ENCODE measurements at regions of chr15 and their contacts with region 1.

Region 1: GRCh38 chr15:78540141-78540928 is at the start of gene PSMA4:
- DNase-seq: peak; percentile 92
- H3K4me3 ChIP-seq: peak within 1 kb of the TSS; percentile 67 to 96 (median 88)
- H3K27ac ChIP-seq: peak within 1 kb of the TSS; percentile 92
- H3K4me1 ChIP-seq: peaks cover 13% of the 10 kb centered on the region
- H3K27me3 ChIP-seq: no peaks in the 10 kb centered on the region
- CTCF ChIP-seq: peak in 1 of 2 donors; percentile 29
- POLR2A ChIP-seq: no peak
- total RNA-seq, gene PSMA4: 250 and 260 TPM in 2 replicates

Region 2: DNA sequence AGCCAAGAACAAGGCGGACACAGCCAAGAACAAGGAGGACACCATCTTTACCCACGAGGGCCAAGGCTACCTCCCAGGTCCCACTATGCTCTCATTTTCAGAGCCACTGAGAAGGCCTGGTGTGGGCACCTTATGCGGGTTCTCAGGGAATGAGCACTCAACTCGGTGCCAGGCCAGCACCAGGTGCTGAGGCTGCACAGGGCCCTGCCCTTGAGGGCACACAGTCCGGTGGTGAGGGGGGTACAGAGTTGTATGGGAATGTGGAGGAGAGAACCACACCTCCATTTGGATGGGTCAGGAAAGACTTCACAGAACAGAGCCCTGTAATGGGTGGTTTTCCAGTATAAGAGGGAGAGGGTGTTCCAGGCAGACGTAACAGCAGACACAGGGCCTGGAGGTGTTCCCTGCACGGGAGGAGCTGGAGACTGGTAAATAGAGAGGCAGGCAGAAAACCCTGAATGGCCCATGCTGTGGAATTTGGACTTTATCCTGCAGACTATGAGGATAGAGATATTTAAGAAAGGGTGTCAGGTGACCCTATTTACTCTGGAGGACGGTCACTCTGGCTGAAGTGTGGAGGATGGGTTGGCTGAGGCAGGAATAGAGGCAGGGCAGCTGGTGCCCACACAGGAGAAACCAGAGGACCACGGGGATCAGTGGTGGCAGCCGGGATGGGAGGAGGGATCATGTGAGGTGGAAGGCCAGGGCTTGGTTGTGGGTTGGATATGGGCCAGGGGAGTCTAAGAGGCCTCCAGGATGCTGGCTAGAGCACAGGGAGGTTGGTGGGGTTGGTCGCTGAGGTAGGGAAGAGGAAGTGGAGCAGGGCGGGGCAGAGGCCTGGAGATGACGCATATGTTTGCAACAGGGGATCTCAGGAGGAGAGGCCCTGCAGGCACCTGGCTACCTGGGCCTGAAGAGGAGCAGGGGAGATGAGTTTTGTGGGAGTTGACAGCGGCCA is 165.6 kb before region 1 on chr15:
- CTCF ChIA-PET with region 1: no interaction called
- POLR2A ChIA-PET with region 1: no interaction called
- dilution Hi-C with region 1: no loop called
- intact Hi-C with region 1: no loop called
- DNase-seq: no peak
- H3K4me3 ChIP-seq: no peak overlapping the region
- H3K27ac ChIP-seq: no peak overlapping the region
- H3K4me1 ChIP-seq: no peaks in the 10 kb centered on the region
- H3K27me3 ChIP-seq: peaks cover 0 to 3% of the 10 kb centered on the region in 2 experiments
- CTCF ChIP-seq: no peak
- POLR2A ChIP-seq: no peak

Region 3: DNA sequence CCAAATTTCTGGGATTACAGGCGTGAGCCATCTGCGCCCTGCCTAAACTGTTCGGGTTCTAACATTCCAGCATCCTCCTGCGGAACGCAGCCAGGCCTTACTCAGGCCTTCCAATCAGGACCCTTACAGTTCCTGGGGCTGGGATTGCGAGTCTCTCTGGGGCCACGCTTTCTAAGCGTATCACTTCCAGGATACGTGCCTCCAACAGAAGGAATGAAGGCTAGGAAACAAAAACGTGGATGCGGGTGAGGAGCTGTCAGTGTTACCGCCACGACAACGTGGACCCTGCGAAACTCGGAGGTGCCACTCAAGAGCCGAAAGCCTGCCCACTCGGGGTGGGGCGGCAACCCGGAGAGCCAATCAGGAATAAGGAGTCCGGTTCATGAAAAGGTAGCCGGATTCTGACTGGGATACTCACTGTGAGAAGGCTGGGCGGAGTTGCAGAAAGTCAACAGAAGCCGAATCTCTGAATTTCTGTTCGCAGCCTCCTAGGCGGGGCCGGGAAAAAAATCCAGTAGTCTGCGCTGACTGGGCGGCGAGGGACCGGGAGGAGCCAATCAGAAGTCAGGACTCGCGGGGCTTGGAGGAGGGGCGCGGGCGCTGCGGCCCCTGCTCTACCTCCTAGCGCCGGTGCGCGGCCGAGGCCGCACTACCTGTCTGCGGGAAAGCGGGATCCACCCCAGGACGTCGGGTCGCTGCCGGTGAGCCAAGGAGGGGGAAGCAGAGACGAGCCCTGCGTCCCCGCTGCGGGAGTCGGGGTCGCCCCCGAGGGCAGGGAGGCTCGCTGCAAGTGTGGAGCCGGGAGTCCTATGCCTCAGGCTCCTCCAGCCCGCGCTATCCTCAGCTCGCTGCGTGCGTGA is 33.1 kb before region 1 on chr15 and contains the start of gene HYKK:
- CTCF ChIA-PET with region 1: no interaction called
- POLR2A ChIA-PET with region 1: no interaction called
- dilution Hi-C with region 1: no loop called
- intact Hi-C with region 1: loop called (anchors 1 kb)
- DNase-seq: peak; percentile 98
- H3K4me3 ChIP-seq: peak within 1 kb of the TSS; percentile 35 to 65 (median 65)
- H3K27ac ChIP-seq: no peak within 1 kb of the TSS
- H3K4me1 ChIP-seq: peaks cover 4% of the 10 kb centered on the region
- H3K27me3 ChIP-seq: peaks cover 3 to 4% of the 10 kb centered on the region in 2 experiments
- CTCF ChIP-seq: peak in 1 of 2 donors; percentile 21
- POLR2A ChIP-seq: no peak
- total RNA-seq, gene HYKK: 2.1 and 2.7 TPM in 2 replicates

Region 4: GRCh38 chr15:78565097-78565951 is 25.0 kb after region 1 on chr15 and contains the start of gene CHRNA5:
- CTCF ChIA-PET with region 1: interaction called, 27 read pairs
- POLR2A ChIA-PET with region 1: interaction called, 7 read pairs
- dilution Hi-C with region 1: no loop called
- intact Hi-C with region 1: loop called (anchors 1 kb)
- DNase-seq: peak; percentile 85
- H3K4me3 ChIP-seq: peak within 1 kb of the TSS; percentile 66 to 95 (median 94)
- H3K27ac ChIP-seq: no peak within 1 kb of the TSS
- H3K4me1 ChIP-seq: peaks cover 12% of the 10 kb centered on the region
- H3K27me3 ChIP-seq: peaks cover 2 to 7% of the 10 kb centered on the region in 2 experiments
- CTCF ChIP-seq: no peak
- POLR2A ChIP-seq: peak; percentile 75
- total RNA-seq, gene CHRNA5: 12.7 and 15.6 TPM in 2 replicates